ENCODE measurements at regions of chr4 and their contacts with region 1.

Region 1: DNA sequence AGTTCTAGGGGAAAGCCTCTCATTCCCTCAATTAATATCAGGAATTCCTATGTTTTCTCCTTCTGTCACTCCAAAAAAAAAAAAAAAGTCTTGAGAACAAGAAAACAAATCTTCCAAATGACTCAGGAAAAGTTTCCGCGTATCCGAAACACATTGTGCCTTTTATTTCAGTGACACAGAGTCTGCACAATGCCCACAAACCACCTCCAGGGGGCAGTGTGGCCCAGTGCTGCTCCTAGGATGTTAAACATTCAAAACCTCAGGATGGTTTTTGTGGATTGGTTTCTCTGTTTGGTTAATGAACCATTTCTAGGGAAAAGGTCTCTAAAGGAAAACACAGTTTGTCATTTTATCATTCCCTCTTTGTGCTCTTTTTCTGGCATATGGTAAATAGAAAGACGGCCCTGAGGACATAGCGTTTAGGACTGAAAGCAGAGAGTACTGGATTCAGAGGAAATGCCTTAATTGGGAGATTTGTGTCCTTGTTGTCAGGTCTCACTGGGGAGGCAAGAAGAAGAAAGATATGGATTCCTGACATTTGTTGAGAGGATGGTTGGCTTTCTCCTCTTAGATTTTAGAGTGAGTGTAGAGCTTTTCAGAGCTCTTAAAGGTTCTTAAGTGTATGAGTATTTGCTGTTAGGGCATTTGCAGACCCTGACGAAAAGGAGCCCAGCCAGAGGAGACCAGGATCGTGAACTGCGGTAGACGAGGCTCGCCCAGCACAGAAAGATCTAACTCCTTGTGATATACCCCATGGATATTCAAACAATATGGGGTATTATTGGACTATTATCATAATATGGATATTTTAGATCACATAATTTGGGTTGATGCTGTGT is 65.7 kb upstream of the MAP9 start:
- DNase-seq: peak; percentile 63

Region 2: GRCh38 chr4:155777971-155778735 is 335.7 kb after region 1 on chr4:
- in situ Hi-C with region 1: loop called (anchors 10 kb)
- DNase-seq: no peak

Measured in G401 (cell line).